CD14-positive monocyte (primary cell): ENCODE measurements at regions of chr2 and their contacts with region 1.

Region 1: DNA sequence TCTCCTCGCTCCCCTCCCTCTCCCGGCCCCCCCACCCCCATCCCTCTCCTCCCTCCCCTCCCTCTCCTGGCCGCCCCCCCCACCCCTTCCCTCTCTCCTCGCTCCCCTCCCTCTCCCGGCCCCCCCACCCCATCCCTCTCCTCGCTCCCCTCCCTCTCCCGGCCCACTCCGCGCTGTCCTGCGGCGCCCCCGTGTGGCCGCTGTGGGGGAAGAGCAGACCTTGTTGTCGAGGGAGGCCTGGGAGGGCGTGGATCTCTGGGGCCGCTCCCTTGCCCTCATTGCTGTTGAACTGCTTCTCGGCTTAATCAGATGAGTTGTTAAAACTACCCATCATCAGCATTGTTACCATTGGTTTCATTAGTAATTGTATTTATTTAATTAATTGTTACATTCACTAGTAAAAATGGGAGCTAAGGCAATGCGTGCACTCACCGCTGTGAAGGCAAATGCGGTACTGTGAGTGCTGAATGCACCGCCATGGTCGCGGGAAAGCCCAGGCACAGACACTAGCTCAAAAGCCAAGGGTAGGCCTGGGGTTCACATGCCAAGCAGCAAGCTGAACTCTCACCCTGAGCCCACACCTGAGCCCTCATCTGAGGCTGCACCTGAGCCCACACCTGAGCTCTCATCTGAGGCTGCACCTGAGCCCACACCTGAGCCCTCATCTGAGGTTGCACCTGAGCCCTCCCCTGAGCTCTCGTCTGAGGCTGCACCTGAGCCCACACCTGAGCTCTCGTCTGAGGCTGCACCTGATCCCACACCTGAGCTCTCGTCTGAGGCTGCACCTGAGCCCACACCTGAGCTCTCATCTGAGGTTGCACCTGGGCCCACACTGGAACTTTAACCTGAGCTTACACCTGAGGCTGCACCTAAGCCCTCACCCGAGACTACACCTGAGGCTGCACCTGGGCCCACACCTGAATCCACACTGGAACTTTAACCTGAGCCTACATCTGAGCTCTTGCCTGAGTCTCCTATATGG is 8.8 kb downstream of the RTP5 start:
- DNase-seq: peak; percentile 40 to 62 (median 58)
- H3K4me3 ChIP-seq: no peak overlapping the region
- H3K4me3 Mint-ChIP-seq: no peak overlapping the region
- H3K27ac ChIP-seq: no peak overlapping the region
- H3K27ac Mint-ChIP-seq: peak overlapping the region in 1 of 7 donors; percentile 40
- H3K4me1 ChIP-seq: peaks cover 20 to 21% of the 10 kb centered on the region in 2 donors
- H3K4me1 Mint-ChIP-seq: peaks cover 15% of the 10 kb centered on the region
- H3K27me3 ChIP-seq: no peaks in the 10 kb centered on the region
- H3K27me3 Mint-ChIP-seq: peaks cover 0 to 10% (median 2%) of the 10 kb centered on the region in 3 donors
- CTCF ChIP-seq: peak; percentile 56

Region 2: DNA sequence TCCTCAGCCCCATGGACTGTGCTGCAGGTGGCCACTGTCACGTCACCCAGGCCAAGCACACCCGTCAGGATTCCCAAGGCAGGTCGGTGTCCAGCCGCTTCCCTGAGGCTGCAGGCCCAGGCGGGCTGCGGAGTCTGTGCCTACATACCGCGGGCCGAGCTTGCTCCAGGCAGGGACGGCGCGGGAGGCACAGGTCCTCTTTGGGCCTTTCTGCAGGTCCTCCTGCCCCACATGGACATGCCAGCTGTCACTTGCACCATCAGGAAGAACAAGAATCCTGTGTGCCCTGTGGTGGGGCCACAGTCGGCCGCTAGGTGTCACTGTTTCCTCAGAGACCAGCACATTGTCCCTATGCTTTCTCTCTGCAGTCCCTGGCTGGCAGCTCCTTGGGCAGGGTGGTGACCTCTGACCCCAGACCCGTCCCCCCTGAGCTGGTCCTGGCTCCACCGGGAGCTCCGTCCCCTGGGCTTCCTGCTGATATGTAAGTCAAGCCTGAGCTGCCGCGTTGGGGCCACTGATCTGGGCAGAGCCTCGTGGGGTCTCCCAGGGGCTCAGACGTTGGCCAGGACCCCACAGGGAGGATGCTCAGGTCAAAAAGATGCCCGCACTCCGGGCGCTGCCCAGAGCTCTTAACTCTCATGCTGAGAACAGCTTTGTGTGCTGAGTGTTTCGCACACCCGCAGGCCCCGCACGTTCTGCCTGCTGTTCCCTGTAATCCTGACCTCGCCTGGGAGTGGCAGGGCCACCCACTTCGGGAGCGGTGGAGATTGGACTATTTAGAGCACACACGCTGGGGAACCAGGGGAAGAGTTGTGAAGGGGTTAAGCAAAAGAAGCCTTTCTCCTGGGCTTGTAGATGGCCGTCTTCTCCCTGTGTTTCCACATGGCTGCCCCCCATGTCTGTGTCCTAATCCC is 1026.9 kb before region 1 on chr2:
- intact Hi-C with region 1: loop called in 1 of 2 experiments (anchors 5 kb)
- DNase-seq: peak; percentile 56 to 67 (median 67)
- H3K4me3 ChIP-seq: no peak overlapping the region
- H3K4me3 Mint-ChIP-seq: no peak overlapping the region
- H3K27ac ChIP-seq: no peak overlapping the region
- H3K27ac Mint-ChIP-seq: no peak overlapping the region
- H3K4me1 ChIP-seq: no peaks in the 10 kb centered on the region
- H3K4me1 Mint-ChIP-seq: no peaks in the 10 kb centered on the region
- H3K27me3 ChIP-seq: no peaks in the 10 kb centered on the region
- H3K27me3 Mint-ChIP-seq: peaks cover 1 to 6% (median 3%) of the 10 kb centered on the region in 3 donors
- CTCF ChIP-seq: peak; percentile 88

Region 3: GRCh38 chr2:241762933-241763369 is 115.3 kb before region 1 on chr2:
- intact Hi-C with region 1: no loop called
- DNase-seq: peak in 1 of 3 donors; percentile 22
- H3K4me3 ChIP-seq: no peak overlapping the region
- H3K4me3 Mint-ChIP-seq: no peak overlapping the region
- H3K27ac ChIP-seq: no peak overlapping the region
- H3K27ac Mint-ChIP-seq: peak overlapping the region in 3 of 7 donors; percentile 3 to 75 (median 60)
- H3K4me1 ChIP-seq: peaks cover 11 to 14% of the 10 kb centered on the region in 2 donors
- H3K4me1 Mint-ChIP-seq: peaks cover 20% of the 10 kb centered on the region
- H3K27me3 ChIP-seq: no peaks in the 10 kb centered on the region
- H3K27me3 Mint-ChIP-seq: peaks cover 0 to 7% (median 0%) of the 10 kb centered on the region in 3 donors
- CTCF ChIP-seq: no peak

Region 4: GRCh38 chr2:241844066-241844728 is 34.1 kb before region 1 on chr2:
- intact Hi-C with region 1: no loop called
- DNase-seq: peak; percentile 43 to 49 (median 47)
- H3K4me3 ChIP-seq: peak overlapping the region; percentile 39 to 69 (median 46)
- H3K4me3 Mint-ChIP-seq: peak overlapping the region; percentile 78 to 90
- H3K27ac ChIP-seq: no peak overlapping the region
- H3K27ac Mint-ChIP-seq: peak overlapping the region in 5 of 7 donors; percentile 45 to 85 (median 76)
- H3K4me1 ChIP-seq: peaks cover 14 to 35% of the 10 kb centered on the region in 2 donors
- H3K4me1 Mint-ChIP-seq: peaks cover 38% of the 10 kb centered on the region
- H3K27me3 ChIP-seq: no peaks in the 10 kb centered on the region
- H3K27me3 Mint-ChIP-seq: peaks cover 7 to 27% (median 23%) of the 10 kb centered on the region in 3 donors
- CTCF ChIP-seq: no peak